CD4-positive, alpha-beta memory T cell (primary cell): ENCODE measurements at regions of chr12 and their contacts with region 1.

Region 1: GRCh38 chr12:12467688-12468261 is 94.9 kb downstream of the DUSP16 start:
- DNase-seq: peak; percentile 76 to 88 (median 85)
- H3K4me3 ChIP-seq: peak overlapping the region in 1 of 2 donors; percentile 12
- H3K4me3 Mint-ChIP-seq: peak overlapping the region; percentile 52 to 83 (median 62)
- H3K27ac ChIP-seq: peak overlapping the region; percentile 82
- H3K27ac Mint-ChIP-seq: peak overlapping the region; percentile 98 to 100 (median 99)
- H3K4me1 ChIP-seq: peaks cover 78% of the 10 kb centered on the region
- H3K4me1 Mint-ChIP-seq: peaks cover 55 to 90% (median 76%) of the 10 kb centered on the region in 4 donors
- H3K27me3 ChIP-seq: no peaks in the 10 kb centered on the region
- H3K27me3 Mint-ChIP-seq: no peaks in the 10 kb centered on the region

Region 2: GRCh38 chr12:11661491-11662089 is 806.2 kb before region 1 on chr12:
- CTCF ChIA-PET with region 1: no interaction called
- POLR2A ChIA-PET with region 1: no interaction called
- intact Hi-C with region 1: no loop called
- DNase-seq: no peak
- H3K4me3 ChIP-seq: no peak overlapping the region
- H3K4me3 Mint-ChIP-seq: peak overlapping the region in 6 of 8 donors; percentile 0 to 60 (median 15)
- H3K27ac ChIP-seq: no peak overlapping the region
- H3K27ac Mint-ChIP-seq: peak overlapping the region in 5 of 7 donors; percentile 11 to 71 (median 38)
- H3K4me1 ChIP-seq: peaks cover 80% of the 10 kb centered on the region
- H3K4me1 Mint-ChIP-seq: peaks cover 66 to 91% (median 80%) of the 10 kb centered on the region in 4 donors
- H3K27me3 ChIP-seq: no peaks in the 10 kb centered on the region
- H3K27me3 Mint-ChIP-seq: no peaks in the 10 kb centered on the region

Region 3: DNA sequence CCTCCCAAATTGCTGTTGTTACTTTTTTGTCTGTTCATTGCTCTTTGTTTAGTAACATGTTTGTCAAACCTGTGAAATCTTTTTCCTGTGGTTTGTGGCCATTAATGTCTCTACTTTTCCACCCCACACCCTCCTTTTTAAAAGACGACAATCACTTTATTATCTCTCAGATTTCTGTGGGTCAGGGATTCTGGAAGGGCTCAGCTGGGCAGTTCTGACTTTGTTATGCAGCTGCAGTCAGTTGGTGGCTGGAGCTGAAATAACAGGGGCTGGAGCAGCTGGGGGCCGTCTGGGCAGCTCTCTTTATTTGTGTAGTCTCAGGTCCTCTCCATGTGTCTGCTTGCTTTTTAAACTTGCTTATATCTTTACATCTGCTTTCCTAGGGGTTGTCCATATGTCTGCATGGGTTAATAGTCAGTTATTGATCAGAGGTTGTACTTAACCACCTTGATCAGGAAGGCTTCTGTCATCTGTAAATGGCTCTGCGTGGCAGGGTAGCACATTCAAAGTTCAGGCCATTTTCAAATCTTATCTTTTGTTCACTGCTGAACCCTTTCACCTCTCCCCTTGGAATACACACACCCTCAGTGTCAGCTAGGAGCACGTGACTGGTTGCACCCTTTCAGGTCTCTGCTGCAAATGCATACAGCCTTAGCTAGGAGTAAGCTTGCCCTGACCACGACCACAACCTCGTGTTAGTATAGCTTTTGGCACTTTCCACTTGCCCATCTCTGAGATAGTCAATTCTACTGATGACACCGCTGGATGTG is 83.0 kb before region 1 on chr12:
- CTCF ChIA-PET with region 1: interaction called, 100 read pairs
- POLR2A ChIA-PET with region 1: interaction called, 111 read pairs
- intact Hi-C with region 1: no loop called
- DNase-seq: peak in 4 of 5 donors; percentile 46 to 48 (median 47)
- H3K4me3 ChIP-seq: peak overlapping the region in 1 of 2 donors; percentile 9
- H3K4me3 Mint-ChIP-seq: peak overlapping the region; percentile 59 to 85 (median 74)
- H3K27ac ChIP-seq: peak overlapping the region; percentile 50
- H3K27ac Mint-ChIP-seq: peak overlapping the region; percentile 86 to 99 (median 96)
- H3K4me1 ChIP-seq: peaks cover 87% of the 10 kb centered on the region
- H3K4me1 Mint-ChIP-seq: peaks cover 46 to 87% (median 68%) of the 10 kb centered on the region in 4 donors
- H3K27me3 ChIP-seq: no peaks in the 10 kb centered on the region
- H3K27me3 Mint-ChIP-seq: no peaks in the 10 kb centered on the region

Region 4: DNA sequence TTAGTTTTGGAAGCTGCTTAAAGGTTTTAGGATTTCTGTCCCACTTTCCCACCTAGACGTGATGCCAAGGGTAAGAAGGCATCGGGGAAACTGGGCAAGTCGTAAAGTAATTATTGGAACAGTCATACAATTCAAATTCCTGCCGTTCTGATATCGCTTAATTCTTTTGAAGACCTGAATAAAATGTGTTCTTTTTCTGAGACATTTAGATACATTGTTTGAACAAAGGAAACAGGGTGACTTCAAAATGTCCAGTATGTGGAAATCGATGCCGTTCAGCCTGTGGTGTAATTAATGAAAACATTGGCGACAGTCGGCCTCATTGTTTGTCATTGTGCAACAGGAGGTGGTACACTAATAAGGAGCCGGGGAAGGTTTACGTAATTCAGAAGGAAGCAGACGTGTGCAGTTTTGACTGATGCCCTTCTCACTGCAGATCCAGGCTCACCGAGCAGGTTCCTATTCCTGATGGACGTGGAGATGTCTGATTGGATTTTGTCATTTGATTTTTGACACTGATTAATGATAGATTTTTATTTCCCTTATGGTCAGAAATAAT is 18.2 kb before region 1 on chr12:
- CTCF ChIA-PET with region 1: interaction called, 33 read pairs
- POLR2A ChIA-PET with region 1: interaction called, 970 read pairs
- intact Hi-C with region 1: no loop called
- DNase-seq: no peak
- H3K4me3 ChIP-seq: no peak overlapping the region
- H3K4me3 Mint-ChIP-seq: no peak overlapping the region
- H3K27ac ChIP-seq: no peak overlapping the region
- H3K27ac Mint-ChIP-seq: peak overlapping the region in 5 of 7 donors; percentile 43 to 75 (median 51)
- H3K4me1 ChIP-seq: peaks cover 30% of the 10 kb centered on the region
- H3K4me1 Mint-ChIP-seq: peaks cover 20 to 49% (median 38%) of the 10 kb centered on the region in 4 donors
- H3K27me3 ChIP-seq: no peaks in the 10 kb centered on the region
- H3K27me3 Mint-ChIP-seq: no peaks in the 10 kb centered on the region

Region 5: DNA sequence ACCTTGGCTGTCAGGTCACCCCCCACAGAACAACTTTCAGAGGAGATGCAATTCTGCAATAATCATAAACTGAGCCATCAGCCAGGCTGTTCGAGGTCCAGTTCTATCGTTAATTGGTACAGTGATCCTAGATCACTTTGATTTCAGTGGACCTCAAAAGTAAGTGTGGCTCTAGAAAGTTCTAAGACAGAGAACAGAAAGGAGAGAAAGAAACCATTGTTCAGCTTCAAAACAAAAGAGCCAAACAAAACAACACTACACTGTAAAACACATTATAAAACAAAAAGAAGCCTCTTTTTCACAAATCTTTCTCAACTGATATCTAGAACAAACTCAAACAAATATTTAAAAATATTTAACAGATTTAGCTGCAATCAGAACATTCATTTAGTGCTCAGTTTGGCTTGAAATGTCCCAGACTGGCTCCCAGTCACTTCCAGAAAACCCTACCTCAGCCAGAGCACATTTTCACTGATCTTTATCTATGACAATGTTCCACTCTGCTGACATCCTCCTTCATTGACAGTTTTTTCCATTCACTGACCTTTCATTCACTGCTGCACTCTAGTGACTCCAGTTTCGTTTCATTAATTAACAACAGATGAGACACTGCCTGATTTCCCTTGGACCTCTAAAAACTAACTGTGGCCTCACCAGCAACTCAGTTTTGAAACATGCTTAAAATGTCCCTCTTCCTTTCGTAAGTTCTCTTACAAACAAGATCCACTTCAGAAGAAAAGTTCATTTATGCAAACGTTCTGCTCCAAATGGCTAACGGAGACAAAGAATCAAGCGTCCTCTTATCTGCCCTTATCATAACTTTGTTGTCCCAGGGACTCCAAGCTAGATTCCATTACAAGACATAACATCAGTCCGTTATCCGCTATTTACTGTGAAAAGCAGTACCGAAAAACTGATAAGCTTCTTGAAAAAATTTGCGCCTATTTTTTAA is 38.0 kb after region 1 on chr12:
- CTCF ChIA-PET with region 1: interaction called, 7 read pairs
- POLR2A ChIA-PET with region 1: interaction called, 970 read pairs
- intact Hi-C with region 1: loop called (anchors 2 kb)
- DNase-seq: peak in 4 of 5 donors; percentile 28 to 42 (median 32)
- H3K4me3 ChIP-seq: no peak overlapping the region
- H3K4me3 Mint-ChIP-seq: peak overlapping the region in 7 of 8 donors; percentile 37 to 84 (median 73)
- H3K27ac ChIP-seq: peak overlapping the region; percentile 48
- H3K27ac Mint-ChIP-seq: peak overlapping the region; percentile 66 to 95 (median 90)
- H3K4me1 ChIP-seq: peaks cover 65% of the 10 kb centered on the region
- H3K4me1 Mint-ChIP-seq: peaks cover 53 to 77% (median 61%) of the 10 kb centered on the region in 4 donors
- H3K27me3 ChIP-seq: no peaks in the 10 kb centered on the region
- H3K27me3 Mint-ChIP-seq: no peaks in the 10 kb centered on the region

Region 6: GRCh38 chr12:12696562-12697383 is 229.0 kb after region 1 on chr12:
- CTCF ChIA-PET with region 1: no interaction called
- POLR2A ChIA-PET with region 1: interaction called, 14 read pairs
- intact Hi-C with region 1: no loop called
- DNase-seq: peak; percentile 93 to 96 (median 95)
- H3K4me3 ChIP-seq: peak overlapping the region; percentile 37 to 74
- H3K4me3 Mint-ChIP-seq: peak overlapping the region; percentile 86 to 97 (median 94)
- H3K27ac ChIP-seq: peak overlapping the region; percentile 87
- H3K27ac Mint-ChIP-seq: peak overlapping the region; percentile 98 to 100 (median 100)
- H3K4me1 ChIP-seq: peaks cover 24% of the 10 kb centered on the region
- H3K4me1 Mint-ChIP-seq: peaks cover 16 to 41% (median 30%) of the 10 kb centered on the region in 4 donors
- H3K27me3 ChIP-seq: no peaks in the 10 kb centered on the region
- H3K27me3 Mint-ChIP-seq: no peaks in the 10 kb centered on the region